Caco-2 (cell line): ENCODE measurements at regions of chr13 and their contacts with region 1.

Region 1: GRCh38 chr13:24228852-24229458 is 68.4 kb downstream of the SPATA13 start:
- DNase-seq: peak in 1 of 2 experiments; percentile 60
- H3K4me3 ChIP-seq: no peak overlapping the region
- H3K4me3 Mint-ChIP-seq: no peak overlapping the region
- H3K27ac Mint-ChIP-seq: no peak overlapping the region
- H3K4me1 ChIP-seq: no peaks in the 10 kb centered on the region
- H3K4me1 Mint-ChIP-seq: peaks cover 6% of the 10 kb centered on the region
- H3K27me3 ChIP-seq: no peaks in the 10 kb centered on the region
- H3K27me3 Mint-ChIP-seq: no peaks in the 10 kb centered on the region
- CTCF ChIP-seq: peak; percentile 80 to 96

Region 2: GRCh38 chr13:23817830-23818229 is 411.1 kb before region 1 on chr13:
- CTCF ChIA-PET with region 1: no interaction called
- POLR2A ChIA-PET with region 1: no interaction called
- intact Hi-C with region 1: no loop called
- DNase-seq: no peak
- H3K4me3 ChIP-seq: no peak overlapping the region
- H3K4me3 Mint-ChIP-seq: no peak overlapping the region
- H3K27ac Mint-ChIP-seq: no peak overlapping the region
- H3K4me1 ChIP-seq: no peaks in the 10 kb centered on the region
- H3K4me1 Mint-ChIP-seq: peaks cover 13% of the 10 kb centered on the region
- H3K27me3 ChIP-seq: no peaks in the 10 kb centered on the region
- H3K27me3 Mint-ChIP-seq: no peaks in the 10 kb centered on the region
- CTCF ChIP-seq: no peak

Region 3: GRCh38 chr13:24020375-24020830 is 208.6 kb before region 1 on chr13:
- CTCF ChIA-PET with region 1: interaction called, 12 read pairs
- POLR2A ChIA-PET with region 1: no interaction called
- intact Hi-C with region 1: loop called (anchors 2 kb)
- DNase-seq: peak in 1 of 2 experiments; percentile 46
- H3K4me3 ChIP-seq: no peak overlapping the region
- H3K4me3 Mint-ChIP-seq: no peak overlapping the region
- H3K27ac Mint-ChIP-seq: no peak overlapping the region
- H3K4me1 ChIP-seq: no peaks in the 10 kb centered on the region; the same call in 1 of the 2 replicates
- H3K4me1 Mint-ChIP-seq: no peaks in the 10 kb centered on the region
- H3K27me3 ChIP-seq: no peaks in the 10 kb centered on the region
- H3K27me3 Mint-ChIP-seq: no peaks in the 10 kb centered on the region
- CTCF ChIP-seq: peak; percentile 56 to 77

Region 4: GRCh38 chr13:24160454-24161009 is 68.4 kb before region 1 on chr13 and contains the start of gene SPATA13:
- CTCF ChIA-PET with region 1: interaction called, 11 read pairs
- POLR2A ChIA-PET with region 1: no interaction called
- intact Hi-C with region 1: no loop called
- DNase-seq: peak; percentile 94 to 96
- H3K4me3 ChIP-seq: peak within 1 kb of the TSS; percentile 97
- H3K4me3 Mint-ChIP-seq: peak within 1 kb of the TSS; percentile 73
- H3K27ac Mint-ChIP-seq: peak within 1 kb of the TSS; percentile 16
- H3K4me1 ChIP-seq: peaks cover 9% of the 10 kb centered on the region
- H3K4me1 Mint-ChIP-seq: peaks cover 12% of the 10 kb centered on the region
- H3K27me3 ChIP-seq: no peaks in the 10 kb centered on the region
- H3K27me3 Mint-ChIP-seq: no peaks in the 10 kb centered on the region
- CTCF ChIP-seq: no peak
- total RNA-seq, gene SPATA13: 10.1 and 10.5 TPM in 2 replicates

Region 5: DNA sequence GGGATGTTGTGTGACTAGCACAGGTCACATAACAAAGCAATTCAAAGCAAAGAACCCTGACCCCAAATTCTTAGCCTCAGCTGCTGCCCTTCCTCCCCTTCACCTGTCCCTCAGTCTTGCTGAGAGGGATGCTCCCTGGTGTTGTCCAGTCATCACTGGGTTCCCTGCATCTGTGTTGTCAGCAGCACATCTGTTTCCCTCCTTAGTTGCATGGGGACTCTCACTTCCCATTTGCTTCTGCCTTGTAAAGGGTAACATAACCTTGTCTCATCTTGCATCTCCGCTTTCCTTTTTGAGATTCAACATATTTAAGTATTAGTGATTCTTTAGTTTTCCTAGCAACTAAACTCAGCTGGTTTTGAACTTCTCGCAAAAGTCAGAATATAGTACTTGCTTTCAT is 14.4 kb before region 1 on chr13:
- CTCF ChIA-PET with region 1: no interaction called
- POLR2A ChIA-PET with region 1: no interaction called
- intact Hi-C with region 1: no loop called
- DNase-seq: no peak
- H3K4me3 ChIP-seq: no peak overlapping the region
- H3K4me3 Mint-ChIP-seq: no peak overlapping the region
- H3K27ac Mint-ChIP-seq: no peak overlapping the region
- H3K4me1 ChIP-seq: no peaks in the 10 kb centered on the region
- H3K4me1 Mint-ChIP-seq: no peaks in the 10 kb centered on the region
- H3K27me3 ChIP-seq: no peaks in the 10 kb centered on the region
- H3K27me3 Mint-ChIP-seq: no peaks in the 10 kb centered on the region
- CTCF ChIP-seq: no peak